Breast epithelium (tissue), 4 donors: ENCODE measurements at regions of chr1 and their contacts with region 1.

Region 1: DNA sequence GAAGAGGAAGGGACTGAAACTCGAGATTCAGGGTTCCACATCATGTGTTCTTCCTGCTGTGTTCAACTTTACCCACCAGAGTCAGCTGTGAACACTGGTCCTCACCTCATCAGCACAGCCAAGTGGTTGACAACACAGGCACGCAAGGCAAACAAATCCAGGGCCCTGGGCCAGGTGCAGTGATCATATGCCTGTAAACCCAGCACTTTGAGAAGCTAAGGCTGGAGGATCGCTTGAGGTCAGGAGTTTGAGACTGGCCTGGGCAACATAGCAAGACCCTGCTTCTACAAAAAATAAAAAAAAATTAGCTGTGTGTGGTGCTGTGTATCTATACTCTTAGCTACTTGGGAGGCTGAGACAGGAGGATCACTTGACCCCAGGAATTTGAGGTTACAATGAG is 8.4 kb upstream of the XKR8 start:
- DNase-seq: no peak
- H3K4me3 ChIP-seq: no peak overlapping the region
- H3K27ac ChIP-seq: no peak overlapping the region
- H3K4me1 ChIP-seq: no peaks in the 10 kb centered on the region
- H3K27me3 ChIP-seq: no peaks in the 10 kb centered on the region
- CTCF ChIP-seq: no peak
- POLR2A ChIP-seq: no peak

Region 2: DNA sequence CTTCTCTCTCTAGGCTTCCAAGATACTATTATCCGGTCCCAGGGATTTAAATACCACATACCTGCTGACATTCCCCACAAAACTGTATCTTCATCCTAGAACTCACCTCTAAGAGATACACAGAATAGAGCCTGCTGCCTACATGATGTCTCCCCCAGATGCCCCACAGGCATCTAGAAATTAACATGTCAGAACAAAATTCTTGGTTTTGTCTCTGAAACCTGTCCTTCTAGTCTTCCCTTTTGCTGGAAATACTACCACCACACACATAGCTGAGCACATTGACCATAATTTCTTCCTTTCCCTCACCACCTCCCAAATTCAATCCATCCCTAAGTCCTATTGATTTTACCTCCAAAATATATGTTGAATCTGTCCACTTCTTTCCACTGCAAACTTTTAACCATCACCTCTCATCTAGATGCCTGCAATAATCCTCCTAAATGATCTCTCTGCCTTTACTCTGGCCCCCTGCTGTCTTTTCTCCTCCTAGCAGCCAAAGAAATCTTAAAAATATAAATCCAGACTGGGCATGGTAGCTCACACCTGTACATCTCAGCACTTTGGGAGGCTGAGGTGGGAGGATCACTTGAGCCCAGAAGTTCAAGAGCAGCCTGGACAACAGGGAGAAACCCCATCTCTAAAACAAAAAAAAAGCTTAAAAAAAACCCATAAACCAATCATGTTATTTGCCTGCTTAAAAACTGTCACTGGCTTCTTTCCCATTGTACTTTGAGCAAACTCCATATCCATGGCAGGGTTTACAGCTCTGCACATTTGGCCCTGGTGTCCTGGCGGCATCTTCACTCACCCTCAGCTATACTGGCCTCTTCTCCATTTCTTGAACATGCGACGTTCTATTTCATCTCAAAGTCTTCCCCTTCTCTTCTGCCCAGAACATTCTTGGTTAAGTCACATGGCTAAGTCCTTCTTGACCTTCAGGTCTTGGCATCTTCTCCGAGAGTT is 231.8 kb before region 1 on chr1:
- intact Hi-C with region 1: no loop called
- DNase-seq: no peak
- H3K4me3 ChIP-seq: no peak overlapping the region
- H3K27ac ChIP-seq: no peak overlapping the region
- H3K4me1 ChIP-seq: no peaks in the 10 kb centered on the region
- H3K27me3 ChIP-seq: no peaks in the 10 kb centered on the region
- CTCF ChIP-seq: no peak
- POLR2A ChIP-seq: no peak

Region 3: GRCh38 chr1:27894521-27894920 is 56.9 kb before region 1 on chr1:
- intact Hi-C with region 1: loop called (anchors 2 kb)
- DNase-seq: no peak
- H3K4me3 ChIP-seq: no peak overlapping the region
- H3K27ac ChIP-seq: no peak overlapping the region
- H3K4me1 ChIP-seq: no peaks in the 10 kb centered on the region
- H3K27me3 ChIP-seq: no peaks in the 10 kb centered on the region
- CTCF ChIP-seq: no peak
- POLR2A ChIP-seq: no peak

Region 4: DNA sequence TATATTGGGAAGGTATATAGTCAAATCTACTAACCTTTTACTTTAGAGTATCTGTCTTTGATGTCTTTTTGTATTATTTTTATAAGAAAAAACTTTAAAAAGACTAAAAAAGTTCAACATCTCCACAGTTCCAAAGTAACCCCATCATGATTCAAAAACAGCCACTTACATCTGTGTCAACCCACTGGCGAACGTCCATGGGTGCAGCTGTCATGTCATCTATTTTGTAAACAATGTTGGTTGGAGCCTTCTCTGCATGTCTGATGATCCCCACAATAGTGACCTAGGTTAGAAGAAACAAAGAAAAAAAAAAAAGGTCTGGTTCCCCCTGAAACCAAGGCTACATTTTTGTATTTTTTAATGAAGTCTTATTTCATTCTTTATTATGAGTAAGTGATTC is 44.6 kb before region 1 on chr1:
- intact Hi-C with region 1: no loop called
- DNase-seq: no peak
- H3K4me3 ChIP-seq: no peak overlapping the region
- H3K27ac ChIP-seq: no peak overlapping the region
- H3K4me1 ChIP-seq: no peaks in the 10 kb centered on the region
- H3K27me3 ChIP-seq: no peaks in the 10 kb centered on the region
- CTCF ChIP-seq: no peak
- POLR2A ChIP-seq: no peak